ENCODE measurements at regions of chr18 and their contacts with region 1.

Region 1: DNA sequence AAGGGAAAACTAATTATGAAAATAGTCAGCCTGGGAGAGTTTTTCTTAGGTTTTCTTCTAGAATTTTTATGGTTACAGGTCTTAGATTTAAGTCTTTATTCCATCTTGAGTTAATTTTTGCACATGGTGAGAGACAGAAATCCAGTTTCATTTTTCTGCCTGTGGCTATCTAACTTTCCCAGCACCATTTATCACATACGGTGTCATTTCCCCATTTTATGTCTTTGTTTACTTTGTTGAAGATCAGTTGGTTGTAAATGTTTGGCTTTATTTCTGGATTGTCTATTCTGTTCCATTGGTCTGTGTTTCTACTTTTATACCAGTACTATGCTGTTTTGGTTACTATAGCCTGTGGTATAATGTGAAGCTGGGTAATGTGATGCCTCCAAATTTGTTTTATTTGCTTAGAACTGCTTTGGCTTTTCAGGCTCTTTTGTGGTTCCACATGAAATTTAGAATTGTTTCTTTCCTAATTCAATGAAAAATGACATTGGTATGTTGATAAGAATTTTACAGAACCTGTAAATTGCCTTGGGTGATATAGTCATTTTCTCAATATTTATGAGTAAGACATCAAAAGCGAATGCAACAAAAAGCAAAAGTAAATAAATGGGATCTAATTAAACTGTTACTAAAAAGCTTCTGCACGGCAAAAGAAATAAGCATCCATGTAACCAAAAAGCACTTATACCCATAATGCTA is 146.1 kb upstream of the NOL4 start:
- DNase-seq: no peak
- ATAC-seq: no peak
- H3K4me3 ChIP-seq: no peak overlapping the region
- H3K4me3 Mint-ChIP-seq: no peak overlapping the region
- H3K27ac ChIP-seq: no peak overlapping the region
- H3K27ac Mint-ChIP-seq: no peak overlapping the region
- H3K4me1 ChIP-seq: no peaks in the 10 kb centered on the region
- H3K4me1 Mint-ChIP-seq: no peaks in the 10 kb centered on the region
- H3K27me3 ChIP-seq: no peaks in the 10 kb centered on the region
- H3K27me3 Mint-ChIP-seq: no peaks in the 10 kb centered on the region
- CTCF ChIP-seq: no peak

Region 2: GRCh38 chr18:34431042-34431441 is 60.2 kb after region 1 on chr18:
- CTCF ChIA-PET with region 1: no interaction called
- POLR2A ChIA-PET with region 1: no interaction called
- intact Hi-C with region 1: loop called in 1 of 2 experiments (anchors 10 kb)
- DNase-seq: no peak
- ATAC-seq: no peak
- H3K4me3 ChIP-seq: no peak overlapping the region
- H3K4me3 Mint-ChIP-seq: no peak overlapping the region
- H3K27ac ChIP-seq: no peak overlapping the region
- H3K27ac Mint-ChIP-seq: no peak overlapping the region
- H3K4me1 ChIP-seq: no peaks in the 10 kb centered on the region
- H3K4me1 Mint-ChIP-seq: no peaks in the 10 kb centered on the region
- H3K27me3 ChIP-seq: no peaks in the 10 kb centered on the region
- H3K27me3 Mint-ChIP-seq: no peaks in the 10 kb centered on the region
- CTCF ChIP-seq: no peak

Region 3: DNA sequence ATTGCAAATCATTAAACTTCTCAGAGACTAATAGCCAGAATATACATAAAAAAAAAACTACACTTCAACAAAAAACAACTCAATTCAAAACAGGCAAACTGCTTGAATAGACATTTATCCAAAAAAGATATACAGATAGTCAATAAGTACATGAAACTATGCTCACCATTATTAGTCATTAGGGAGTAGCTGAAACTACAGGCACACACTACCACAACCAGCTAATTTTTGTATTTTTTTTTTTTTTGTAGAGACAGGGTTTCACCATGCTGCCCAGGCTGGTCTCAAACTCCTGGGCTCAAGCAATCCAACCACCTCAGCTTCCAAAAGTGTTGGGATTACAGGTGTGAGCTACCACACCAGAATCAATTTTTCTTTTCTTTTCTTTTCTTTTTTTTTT is 1679.6 kb after region 1 on chr18:
- CTCF ChIA-PET with region 1: no interaction called
- POLR2A ChIA-PET with region 1: no interaction called
- intact Hi-C with region 1: no loop called
- DNase-seq: no peak
- ATAC-seq: no peak
- H3K4me3 ChIP-seq: no peak overlapping the region
- H3K4me3 Mint-ChIP-seq: no peak overlapping the region
- H3K27ac ChIP-seq: no peak overlapping the region
- H3K27ac Mint-ChIP-seq: no peak overlapping the region
- H3K4me1 ChIP-seq: no peaks in the 10 kb centered on the region
- H3K4me1 Mint-ChIP-seq: peaks cover 73% of the 10 kb centered on the region
- H3K27me3 ChIP-seq: no peaks in the 10 kb centered on the region
- H3K27me3 Mint-ChIP-seq: no peaks in the 10 kb centered on the region
- CTCF ChIP-seq: no peak